ENCODE measurements at regions of chr7 and their contacts with region 1.

Region 1: DNA sequence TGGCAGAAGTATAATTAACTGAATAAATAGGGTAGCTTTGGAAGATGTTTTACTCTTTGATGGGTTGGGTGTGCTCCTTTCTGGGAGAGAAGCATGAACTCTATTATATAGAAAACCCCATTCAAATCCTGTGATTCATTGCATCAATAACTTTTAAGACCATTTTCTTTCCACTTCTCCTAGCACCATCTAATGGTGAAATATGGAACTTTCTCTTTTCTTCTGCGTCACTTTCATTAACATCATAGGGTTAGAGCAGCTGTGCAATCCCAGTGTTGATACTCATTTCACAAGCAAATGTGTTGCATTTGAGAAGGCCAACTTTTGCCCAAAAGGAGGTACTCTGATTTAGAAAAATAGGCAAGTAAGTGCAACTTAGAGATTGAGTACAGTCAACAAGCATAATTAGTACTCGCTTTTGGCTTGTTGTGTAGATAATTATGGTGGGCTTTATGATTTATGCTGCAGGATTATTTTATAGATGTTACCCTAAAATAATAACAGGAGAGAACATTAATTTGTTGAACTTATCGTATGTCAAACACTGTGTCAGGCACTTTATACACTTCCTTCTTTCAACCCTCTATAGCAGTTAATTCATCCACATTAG is 92.9 kb downstream of the CPED1 start:
- DNase-seq: no peak
- H3K4me3 ChIP-seq: no peak overlapping the region
- CTCF ChIP-seq: no peak
- POLR2A ChIP-seq: no peak

Region 2: DNA sequence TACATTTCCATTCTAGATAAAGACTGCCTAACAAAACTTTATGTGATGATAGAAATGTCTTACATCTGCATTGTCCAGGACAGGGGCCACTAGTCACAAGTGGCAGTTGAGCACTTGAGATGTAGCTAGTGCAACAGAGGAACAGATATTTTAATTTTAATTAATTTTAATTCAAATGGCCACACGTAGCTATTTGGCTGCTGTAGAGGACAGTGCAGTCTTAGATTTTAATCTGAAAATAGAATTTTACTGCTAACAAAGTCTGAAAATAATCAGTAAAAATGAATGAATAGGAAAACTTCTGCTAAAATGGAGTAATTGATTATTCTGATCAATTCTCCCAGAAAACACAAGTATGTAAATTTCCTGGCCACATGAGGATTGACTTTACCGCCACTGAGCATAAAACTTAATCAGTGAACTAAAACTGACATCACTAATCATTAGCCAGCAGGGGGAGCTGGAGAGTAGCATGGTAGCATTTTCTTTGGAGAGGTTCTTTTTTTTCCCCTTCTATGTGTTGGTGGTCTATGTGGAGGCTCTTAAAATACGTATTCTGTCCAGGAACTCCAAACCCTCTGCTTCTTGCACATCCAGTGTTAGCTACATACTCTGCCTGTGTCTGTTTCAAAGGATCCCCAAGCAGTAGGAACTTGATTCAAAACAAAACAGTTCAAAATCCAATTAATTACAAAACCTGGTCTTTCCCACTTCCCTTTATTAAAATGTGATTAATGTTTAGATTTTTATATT is 275.6 kb before region 1 on chr7:
- intact Hi-C with region 1: loop called (anchors 10 kb)
- DNase-seq: peak in 1 of 2 donors; percentile 20
- H3K4me3 ChIP-seq: no peak overlapping the region
- CTCF ChIP-seq: no peak
- POLR2A ChIP-seq: no peak

Region 3: GRCh38 chr7:120987683-120988590 is 93.5 kb before region 1 on chr7:
- intact Hi-C with region 1: loop called (anchors 10 kb)
- DNase-seq: peak; percentile 89 to 97
- H3K4me3 ChIP-seq: peak overlapping the region; percentile 24
- CTCF ChIP-seq: peak in 1 of 3 donors; percentile 82
- POLR2A ChIP-seq: no peak

Region 4: DNA sequence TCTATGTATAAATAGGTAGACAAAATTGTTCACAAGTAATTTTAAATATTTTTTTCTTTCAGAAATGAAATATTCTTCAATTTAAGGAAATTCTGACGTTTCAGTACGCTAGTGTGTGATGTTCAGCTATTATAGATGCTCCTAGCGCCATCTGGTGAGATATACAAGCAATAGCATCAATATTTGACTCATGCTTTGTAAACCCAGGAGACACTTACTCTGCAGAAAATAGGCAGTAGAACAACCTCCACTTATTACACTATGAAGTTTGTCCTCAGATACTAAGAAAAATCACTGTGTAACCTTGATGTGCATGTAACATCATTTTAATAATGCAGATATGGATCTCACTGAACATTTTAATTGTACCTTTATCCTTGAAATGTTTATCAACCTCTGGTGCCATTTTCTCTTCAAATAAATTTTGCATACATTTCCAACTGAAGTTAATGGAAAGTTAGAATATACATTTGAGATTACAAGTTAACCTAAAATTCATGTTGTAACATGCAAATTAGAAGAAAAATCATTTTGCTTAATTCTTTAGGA is 466.2 kb after region 1 on chr7:
- intact Hi-C with region 1: no loop called
- DNase-seq: no peak
- H3K4me3 ChIP-seq: no peak overlapping the region
- CTCF ChIP-seq: peak in 1 of 3 donors; percentile 36
- POLR2A ChIP-seq: no peak